Activated CD4-positive, alpha-beta T cell treated with anti-CD3 and anti-CD28 coated beads, Interleukin-2, amount 10 ng/mL, durations not matched to agents 24 days and 14 days (primary cell): ENCODE measurements at regions of chr1 and their contacts with region 1.

Region 1: GRCh38 chr1:116377541-116378529 is 4.8 kb downstream of the ATP1A1 start:
- DNase-seq: peak; percentile 81
- H3K4me3 Mint-ChIP-seq: peak overlapping the region; percentile 88
- H3K27ac Mint-ChIP-seq: peak overlapping the region; percentile 83
- H3K4me1 Mint-ChIP-seq: peaks cover 70% of the 10 kb centered on the region
- H3K27me3 Mint-ChIP-seq: no peaks in the 10 kb centered on the region

Region 2: GRCh38 chr1:116151739-116152576 is 225.9 kb before region 1 on chr1:
- intact Hi-C with region 1: loop called (anchors 2 kb)
- DNase-seq: peak; percentile 94
- H3K4me3 Mint-ChIP-seq: peak overlapping the region; percentile 77
- H3K27ac Mint-ChIP-seq: peak overlapping the region; percentile 74
- H3K4me1 Mint-ChIP-seq: peaks cover 13% of the 10 kb centered on the region
- H3K27me3 Mint-ChIP-seq: peaks cover 33% of the 10 kb centered on the region

Region 3: DNA sequence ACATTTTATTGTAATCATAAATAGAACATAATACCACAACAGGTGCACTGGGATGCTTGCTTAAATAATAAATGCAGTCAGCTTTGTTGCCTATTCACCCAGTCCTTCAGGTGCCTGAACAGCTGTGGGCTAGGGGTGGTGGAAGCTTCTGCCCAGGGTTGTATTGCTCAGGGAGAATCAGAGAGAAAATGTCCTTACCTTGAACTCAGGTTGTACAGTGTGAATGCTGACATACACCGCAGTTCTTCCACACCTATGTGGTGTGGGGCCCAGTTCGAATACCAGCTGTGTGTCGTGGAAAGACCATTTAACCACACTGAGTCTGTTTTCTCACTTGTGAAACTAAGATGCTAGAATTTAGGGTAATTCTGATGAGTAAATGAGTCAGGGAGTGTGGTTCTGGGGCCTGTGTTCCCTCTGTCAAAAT is 120.5 kb before region 1 on chr1:
- intact Hi-C with region 1: loop called (anchors 5 kb)
- DNase-seq: peak; percentile 63
- H3K4me3 Mint-ChIP-seq: no peak overlapping the region
- H3K27ac Mint-ChIP-seq: peak overlapping the region; percentile 39
- H3K4me1 Mint-ChIP-seq: peaks cover 23% of the 10 kb centered on the region
- H3K27me3 Mint-ChIP-seq: no peaks in the 10 kb centered on the region

Region 4: GRCh38 chr1:116311756-116312691 is 65.8 kb before region 1 on chr1:
- intact Hi-C with region 1: no loop called
- DNase-seq: no peak
- H3K4me3 Mint-ChIP-seq: no peak overlapping the region
- H3K27ac Mint-ChIP-seq: no peak overlapping the region
- H3K4me1 Mint-ChIP-seq: peaks cover 3% of the 10 kb centered on the region
- H3K27me3 Mint-ChIP-seq: no peaks in the 10 kb centered on the region

Region 5: GRCh38 chr1:116407859-116408592 is 30.2 kb after region 1 on chr1:
- intact Hi-C with region 1: no loop called
- DNase-seq: no peak
- H3K4me3 Mint-ChIP-seq: no peak overlapping the region
- H3K27ac Mint-ChIP-seq: no peak overlapping the region
- H3K4me1 Mint-ChIP-seq: peaks cover 8% of the 10 kb centered on the region
- H3K27me3 Mint-ChIP-seq: no peaks in the 10 kb centered on the region

Region 6: DNA sequence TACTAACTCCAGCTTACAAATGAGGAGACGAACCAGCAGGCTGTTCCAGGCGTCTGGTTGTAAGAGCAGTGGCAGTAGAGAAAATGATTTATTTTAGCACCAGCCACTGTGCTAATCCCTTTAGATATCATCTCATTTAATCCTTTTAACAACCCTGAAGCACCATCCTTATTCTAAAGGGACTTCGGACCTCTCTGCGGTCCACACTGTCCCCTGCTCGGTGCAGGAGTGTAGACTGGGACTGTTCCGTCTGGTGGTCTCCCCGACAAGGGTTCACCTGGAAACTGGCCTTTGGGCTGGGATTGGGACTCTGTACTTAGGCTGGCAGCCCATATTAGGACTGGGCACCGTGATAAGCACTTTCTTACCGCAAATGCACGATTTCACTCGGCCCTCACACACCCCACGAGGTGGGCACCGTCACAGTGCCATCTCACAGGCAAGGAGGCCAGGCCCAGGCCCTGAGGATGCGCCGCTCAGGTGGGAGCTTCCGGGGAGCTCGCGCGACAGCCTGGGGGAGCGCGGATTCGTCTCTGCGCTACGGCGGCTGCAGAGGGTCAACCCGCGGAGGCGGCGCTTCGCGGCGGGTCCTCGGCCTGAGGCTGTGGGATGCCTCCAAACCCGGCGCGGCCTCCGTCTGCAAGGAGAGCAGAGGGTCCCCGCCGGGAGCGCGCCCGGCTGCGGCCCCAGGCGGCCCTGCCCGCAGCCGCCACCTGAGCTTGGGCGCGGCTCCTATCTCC is 40.4 kb after region 1 on chr1:
- intact Hi-C with region 1: loop called (anchors 1 kb)
- DNase-seq: peak; percentile 96
- H3K4me3 Mint-ChIP-seq: peak overlapping the region; percentile 89
- H3K27ac Mint-ChIP-seq: peak overlapping the region; percentile 88
- H3K4me1 Mint-ChIP-seq: peaks cover 47% of the 10 kb centered on the region
- H3K27me3 Mint-ChIP-seq: peaks cover 9% of the 10 kb centered on the region

Region 7: DNA sequence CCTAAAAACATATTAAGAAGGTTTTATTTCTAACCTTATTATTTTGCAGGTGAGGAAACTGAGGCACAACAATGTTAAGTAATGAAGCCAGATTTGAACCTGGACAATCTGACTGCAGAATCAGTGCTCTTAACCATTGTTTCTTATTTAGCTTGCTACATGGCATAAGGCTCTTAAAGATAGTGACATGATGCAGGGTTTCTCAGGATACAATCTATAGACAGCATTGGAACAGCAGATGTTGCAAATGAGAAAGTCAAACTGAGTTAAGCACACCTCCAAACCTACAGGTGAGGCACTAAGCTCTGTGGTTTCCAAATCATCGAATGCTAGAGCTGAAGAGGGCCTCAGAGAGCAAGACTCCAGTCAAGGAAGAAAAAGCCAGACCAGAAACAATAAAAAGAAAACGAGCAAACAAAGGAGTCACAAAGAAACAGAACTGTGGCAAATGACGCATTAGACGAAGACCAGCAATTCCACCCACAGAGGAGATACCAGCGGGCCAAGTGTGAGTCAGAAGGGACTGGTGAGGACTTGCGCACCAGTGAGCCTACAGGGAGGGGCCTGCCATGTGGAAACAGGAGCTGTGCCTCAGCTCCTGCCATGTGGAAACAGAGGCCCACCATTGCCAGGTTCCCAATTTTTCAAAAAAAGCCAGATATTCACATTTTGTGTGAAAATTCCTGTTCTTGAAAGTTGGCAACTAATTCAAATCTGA is 178.6 kb after region 1 on chr1:
- intact Hi-C with region 1: loop called (anchors 2 kb)
- DNase-seq: peak; percentile 88
- H3K4me3 Mint-ChIP-seq: peak overlapping the region; percentile 19
- H3K27ac Mint-ChIP-seq: peak overlapping the region; percentile 86
- H3K4me1 Mint-ChIP-seq: peaks cover 69% of the 10 kb centered on the region
- H3K27me3 Mint-ChIP-seq: no peaks in the 10 kb centered on the region

Region 8: DNA sequence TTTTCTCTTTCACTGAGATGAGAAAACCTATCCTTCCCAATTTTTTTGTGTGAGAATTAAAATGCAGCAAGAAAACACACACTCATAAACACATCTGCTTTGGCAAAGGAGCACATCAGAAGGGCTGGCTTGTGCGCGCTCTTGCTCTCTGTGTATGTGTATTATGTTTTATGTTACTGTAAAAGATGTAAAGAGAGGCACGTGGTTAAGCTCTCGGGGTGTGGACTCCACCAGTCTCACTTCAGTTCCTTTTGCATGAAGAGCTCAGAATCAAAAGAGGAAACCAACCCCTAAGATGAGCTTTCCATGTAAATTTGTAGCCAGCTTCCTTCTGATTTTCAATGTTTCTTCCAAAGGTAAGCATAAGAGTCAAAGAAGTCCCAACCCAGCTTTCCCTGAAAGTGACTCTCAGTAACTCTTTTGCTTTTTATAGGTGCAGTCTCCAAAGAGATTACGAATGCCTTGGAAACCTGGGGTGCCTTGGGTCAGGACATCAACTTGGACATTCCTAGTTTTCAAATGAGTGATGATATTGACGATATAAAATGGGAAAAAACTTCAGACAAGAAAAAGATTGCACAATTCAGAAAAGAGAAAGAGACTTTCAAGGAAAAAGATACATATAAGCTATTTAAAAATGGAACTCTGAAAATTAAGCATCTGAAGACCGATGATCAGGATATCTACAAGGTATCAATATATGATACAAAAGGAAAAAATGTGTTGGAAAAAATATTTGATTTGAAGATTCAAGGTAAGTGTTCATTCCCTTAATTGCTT is 376.6 kb after region 1 on chr1 and contains the start of gene CD2:
- intact Hi-C with region 1: loop called (anchors 5 kb)
- DNase-seq: peak; percentile 89
- H3K4me3 Mint-ChIP-seq: peak within 1 kb of the TSS; percentile 98
- H3K27ac Mint-ChIP-seq: peak within 1 kb of the TSS; percentile 97
- H3K4me1 Mint-ChIP-seq: peaks cover 27% of the 10 kb centered on the region
- H3K27me3 Mint-ChIP-seq: no peaks in the 10 kb centered on the region
- total RNA-seq, gene CD2: 500 and 501 TPM in 2 replicates

Region 9: DNA sequence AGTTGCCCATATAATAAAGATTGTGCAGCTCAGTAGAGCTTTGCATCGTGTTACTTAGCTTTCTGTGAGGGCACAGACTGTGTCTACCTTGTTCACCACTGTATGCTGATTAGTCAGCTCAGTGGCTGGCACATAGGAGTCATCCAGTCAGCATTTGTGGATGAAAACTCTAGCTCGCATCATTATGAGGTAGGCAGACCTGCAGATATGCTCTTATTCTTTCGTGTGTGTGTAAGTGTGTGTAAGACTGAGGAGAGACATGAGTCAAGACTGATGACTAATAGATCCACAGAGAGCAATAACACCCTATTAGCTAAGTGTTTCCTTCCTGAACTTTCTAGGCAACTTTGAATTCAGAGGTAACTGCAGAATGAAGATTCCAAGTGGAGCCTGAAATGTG is 699.4 kb after region 1 on chr1:
- intact Hi-C with region 1: loop called (anchors 5 kb)
- DNase-seq: no peak
- H3K4me3 Mint-ChIP-seq: no peak overlapping the region
- H3K27ac Mint-ChIP-seq: peak overlapping the region; percentile 91
- H3K4me1 Mint-ChIP-seq: peaks cover 17% of the 10 kb centered on the region
- H3K27me3 Mint-ChIP-seq: no peaks in the 10 kb centered on the region